Posterior vena cava (tissue), 2 donors: ENCODE measurements at regions of chr20 and their contacts with region 1.

Region 1: GRCh38 chr20:23606652-23607049 is 934 bp upstream of the CST9 start:
- DNase-seq: peak; percentile 92

Region 2: DNA sequence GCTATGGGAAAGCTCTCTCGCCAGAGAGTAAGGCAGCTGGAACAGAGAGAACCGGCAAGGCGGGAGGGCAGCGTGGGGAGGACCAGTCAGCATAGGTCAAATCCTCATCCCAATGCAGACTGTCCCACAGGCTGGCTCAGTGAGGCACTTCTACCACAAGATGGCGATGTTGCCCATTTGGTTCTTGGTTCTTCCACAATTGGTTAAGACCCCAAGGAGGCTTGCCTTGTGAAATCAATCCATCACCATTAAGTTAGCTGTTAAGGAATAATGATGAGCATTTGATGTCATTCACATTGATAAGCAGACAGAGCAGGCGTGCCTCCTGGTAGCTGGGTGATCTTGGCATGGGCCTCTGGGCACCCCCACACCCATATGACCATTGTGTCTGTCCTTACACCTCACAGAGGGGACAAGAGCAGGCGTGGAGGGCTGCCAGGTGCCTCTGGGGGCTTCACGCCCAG is 164.8 kb before region 1 on chr20:
- intact Hi-C with region 1: loop called in 1 of 2 experiments (anchors 5 kb)
- DNase-seq: peak; percentile 77

Region 3: DNA sequence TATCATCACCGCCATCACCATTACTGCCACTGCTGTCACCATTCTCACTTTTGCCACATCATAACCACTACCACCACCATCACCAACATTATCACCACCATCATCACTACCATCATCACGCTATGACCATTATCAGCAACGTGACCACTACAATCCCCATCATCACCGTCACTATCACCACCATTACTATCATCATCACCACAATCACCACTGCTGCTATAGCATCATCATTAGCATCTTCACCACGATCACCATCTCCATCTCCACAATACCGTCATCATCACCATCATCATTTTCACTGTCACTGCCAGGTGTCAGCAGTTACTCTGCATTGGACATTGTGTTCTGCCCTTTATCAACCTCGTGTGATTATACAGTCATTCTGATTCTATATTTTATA is 63.2 kb after region 1 on chr20:
- intact Hi-C with region 1: no loop called
- DNase-seq: no peak

Region 4: DNA sequence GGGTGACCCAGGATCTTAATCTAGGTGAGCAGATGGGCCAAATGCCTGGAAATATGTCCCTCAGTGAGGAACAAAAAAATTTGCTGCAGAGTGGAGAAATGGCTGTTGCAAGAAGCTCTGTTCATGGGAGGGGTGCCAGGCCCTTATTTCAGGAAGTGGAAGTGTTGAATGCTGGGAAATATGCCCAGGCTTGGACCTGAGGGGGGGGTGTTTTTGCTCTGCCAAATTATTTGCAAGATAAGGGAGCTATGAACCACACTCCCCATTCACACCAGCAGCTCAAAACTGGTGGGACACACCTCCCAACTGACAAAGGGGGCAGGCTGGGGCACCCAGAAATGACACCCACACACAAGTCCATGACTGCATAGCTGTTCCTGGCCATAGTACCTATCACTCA is 73.5 kb after region 1 on chr20:
- intact Hi-C with region 1: no loop called
- DNase-seq: no peak